ENCODE measurements at regions of chr3 and their contacts with region 1.

Region 1: DNA sequence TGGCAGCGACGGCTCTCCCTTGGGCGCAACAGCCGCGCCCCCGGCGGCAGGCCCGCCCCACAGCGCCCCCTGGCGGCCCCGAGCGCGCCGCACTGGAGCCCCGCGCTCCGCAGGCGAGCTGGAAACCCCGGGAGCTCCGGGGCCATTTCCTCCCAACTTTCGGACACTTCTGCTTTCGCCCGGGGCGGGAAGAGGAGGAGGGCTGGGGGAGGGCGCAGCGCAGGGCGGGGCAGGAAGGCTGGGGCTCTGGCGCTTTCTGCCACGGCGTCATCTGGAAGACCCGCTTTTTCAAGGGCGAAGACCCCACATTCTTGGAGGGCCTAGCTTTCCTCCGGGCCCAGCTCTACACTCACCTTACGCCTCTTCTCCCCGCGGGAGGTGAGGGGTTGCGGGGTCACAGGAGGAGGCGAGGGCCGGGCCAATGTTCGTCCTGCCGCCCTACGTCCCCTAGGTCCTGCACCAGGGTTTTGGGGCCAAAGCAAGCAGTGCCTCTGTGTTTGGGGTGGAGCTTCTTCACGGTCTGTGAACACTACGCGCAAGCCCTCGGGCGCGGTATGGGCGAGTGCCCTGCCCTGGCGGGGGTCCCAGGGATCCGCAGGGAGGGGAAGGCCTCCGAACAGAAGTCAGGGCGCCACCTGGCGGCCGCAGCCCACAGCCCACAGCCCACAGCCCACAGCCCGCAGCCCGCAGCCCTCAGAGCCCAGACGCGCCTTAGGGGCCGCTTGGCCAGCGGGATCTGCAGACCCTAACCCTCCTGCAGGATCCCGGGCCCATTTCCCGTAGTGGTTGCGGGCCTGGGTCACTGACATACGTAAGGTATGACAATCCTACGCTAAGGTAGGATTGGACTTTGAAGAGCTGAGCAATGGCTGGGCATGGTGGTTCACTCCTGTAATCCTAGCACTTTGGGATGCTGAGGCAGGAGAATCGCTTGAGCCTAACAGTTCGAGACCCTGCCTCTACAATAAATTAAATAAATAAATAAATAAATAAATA is 31.1 kb downstream of the FOXL2 start:
- DNase-seq: peak; percentile 34
- ATAC-seq: peak; percentile 97
- H3K4me3 ChIP-seq: peak overlapping the region; percentile 85
- H3K27ac ChIP-seq: peak overlapping the region; percentile 46; the same call in 1 of the 2 replicates
- H3K4me1 ChIP-seq: peaks cover 3% of the 10 kb centered on the region; the same call in 1 of the 2 replicates
- H3K27me3 ChIP-seq: peaks cover 0 to 4% of the 10 kb centered on the region in 2 experiments; a peak in 2 of 4 replicates
- CTCF ChIP-seq: peak; percentile 67 to 85 (median 82)
- EP300 ChIP-seq: no peak
- POLR2A ChIP-seq: 0 out of 2 replicates have a peak, but pooled peaks have one; percentile 25
- RAD21 ChIP-seq: peak; percentile 80

Region 2: DNA sequence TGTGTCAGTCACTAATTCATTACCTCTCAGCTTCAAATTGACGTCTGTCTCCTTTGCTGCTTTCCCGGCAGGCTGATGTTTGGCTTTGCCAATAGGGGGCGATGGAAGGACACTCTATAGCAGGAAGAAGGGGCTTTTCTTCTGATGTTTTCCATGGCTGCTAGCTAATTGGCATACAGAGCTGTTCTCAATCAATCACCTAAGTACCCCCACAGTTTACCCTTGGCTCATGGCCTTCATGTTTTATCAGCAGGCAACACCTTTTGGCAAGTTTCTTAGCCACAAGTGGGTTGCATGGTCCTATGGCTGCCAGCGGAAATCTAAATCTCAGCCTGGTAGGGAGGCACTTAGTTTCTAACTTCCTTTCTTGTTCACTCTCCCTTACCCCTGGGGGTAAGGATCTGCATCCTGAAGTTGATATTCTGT is 436.4 kb before region 1 on chr3:
- CTCF ChIA-PET with region 1: interaction called, 93 read pairs
- POLR2A ChIA-PET with region 1: no interaction called
- RAD21 ChIA-PET with region 1: interaction called, 51 read pairs
- SMC1A ChIA-PET with region 1: interaction called, 20 read pairs
- in situ Hi-C with region 1: loop called (anchors 5 kb)
- intact Hi-C with region 1: loop called (anchors 1 kb)
- DNase-seq: no peak
- ATAC-seq: peak; percentile 81
- H3K4me3 ChIP-seq: no peak overlapping the region
- H3K27ac ChIP-seq: no peak overlapping the region
- H3K4me1 ChIP-seq: no peaks in the 10 kb centered on the region
- H3K27me3 ChIP-seq: 0 out of 4 replicates have a peak, but pooled peaks cover 0 to 2% of the 10 kb centered on the region in 2 experiments
- CTCF ChIP-seq: peak; percentile 80 to 82 (median 81)
- EP300 ChIP-seq: no peak
- POLR2A ChIP-seq: no peak
- RAD21 ChIP-seq: peak; percentile 76

Region 3: GRCh38 chr3:138608322-138609135 is 307.3 kb before region 1 on chr3 and contains the start of gene FAIM:
- CTCF ChIA-PET with region 1: interaction called, 11 read pairs
- POLR2A ChIA-PET with region 1: no interaction called
- RAD21 ChIA-PET with region 1: interaction called, 5 read pairs
- SMC1A ChIA-PET with region 1: interaction called, 3 read pairs
- in situ Hi-C with region 1: no loop called
- intact Hi-C with region 1: no loop called
- DNase-seq: no peak
- ATAC-seq: peak; percentile 89
- H3K4me3 ChIP-seq: peak within 1 kb of the TSS; percentile 68
- H3K27ac ChIP-seq: peak within 1 kb of the TSS; percentile 38
- H3K4me1 ChIP-seq: peaks cover 5% of the 10 kb centered on the region
- H3K27me3 ChIP-seq: no peaks in the 10 kb centered on the region
- CTCF ChIP-seq: no peak
- EP300 ChIP-seq: no peak
- POLR2A ChIP-seq: peak; percentile 81
- RAD21 ChIP-seq: no peak
- polyA plus RNA-seq, gene FAIM: 21.5 to 32.8 TPM

Region 4: DNA sequence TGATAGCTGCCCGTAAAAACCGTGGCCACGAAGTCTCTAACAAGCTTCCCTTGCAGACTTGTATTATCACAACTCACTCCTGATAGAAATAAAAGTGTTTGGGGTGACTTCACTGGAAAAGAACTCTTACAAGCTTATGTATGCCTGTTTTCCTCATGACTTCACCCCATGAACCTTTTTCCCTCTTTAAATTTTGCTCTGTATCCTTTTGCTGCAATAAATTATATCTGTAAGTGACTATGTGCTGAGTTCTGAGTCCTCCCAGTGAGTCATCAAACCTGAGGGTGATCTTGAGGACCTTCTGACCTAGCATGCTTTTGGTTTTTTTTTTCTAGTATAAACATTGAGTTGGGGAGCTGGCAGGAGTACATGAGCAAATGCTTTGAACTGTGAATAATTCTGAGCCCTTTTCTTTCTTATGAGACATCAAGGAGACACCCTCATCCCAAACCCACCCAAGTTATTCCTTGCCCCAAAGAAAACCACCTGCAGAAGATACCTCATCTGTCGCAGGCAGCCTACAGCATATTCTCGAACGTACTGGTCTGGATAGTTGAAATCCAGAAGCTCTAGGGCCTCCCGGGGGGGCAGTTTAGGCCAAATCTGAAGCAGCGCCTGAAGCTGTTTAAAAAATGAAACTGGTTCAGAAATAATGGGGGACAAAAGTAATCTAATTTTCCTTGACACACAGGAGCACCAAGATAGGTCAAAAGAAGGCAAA is 221.4 kb before region 1 on chr3:
- CTCF ChIA-PET with region 1: interaction called, 380 read pairs
- POLR2A ChIA-PET with region 1: interaction called, 5 read pairs
- RAD21 ChIA-PET with region 1: interaction called, 146 read pairs
- SMC1A ChIA-PET with region 1: interaction called, 76 read pairs
- in situ Hi-C with region 1: loop called (anchors 5 kb)
- intact Hi-C with region 1: loop called (anchors 1 kb)
- DNase-seq: no peak
- ATAC-seq: no peak
- H3K4me3 ChIP-seq: no peak overlapping the region
- H3K27ac ChIP-seq: no peak overlapping the region
- H3K4me1 ChIP-seq: no peaks in the 10 kb centered on the region
- H3K27me3 ChIP-seq: no peaks in the 10 kb centered on the region
- CTCF ChIP-seq: no peak
- EP300 ChIP-seq: no peak
- POLR2A ChIP-seq: no peak
- RAD21 ChIP-seq: no peak

Region 5: GRCh38 chr3:138834359-138835212 is 81.2 kb before region 1 on chr3 and contains the start of gene PIK3CB:
- CTCF ChIA-PET with region 1: no interaction called
- POLR2A ChIA-PET with region 1: no interaction called
- RAD21 ChIA-PET with region 1: interaction called, 4 read pairs
- SMC1A ChIA-PET with region 1: interaction called, 5 read pairs
- in situ Hi-C with region 1: no loop called
- intact Hi-C with region 1: loop called (anchors 2 kb)
- DNase-seq: no peak
- ATAC-seq: peak; percentile 97
- H3K4me3 ChIP-seq: peak within 1 kb of the TSS; percentile 84
- H3K27ac ChIP-seq: peak within 1 kb of the TSS; percentile 88
- H3K4me1 ChIP-seq: peaks cover 6% of the 10 kb centered on the region
- H3K27me3 ChIP-seq: no peaks in the 10 kb centered on the region
- CTCF ChIP-seq: peak; percentile 10 to 47 (median 27); a peak in 3 of 6 replicates
- EP300 ChIP-seq: no peak
- POLR2A ChIP-seq: peak; percentile 94
- RAD21 ChIP-seq: no peak
- polyA plus RNA-seq, gene PIK3CB: 5.0 to 5.5 TPM

Region 6: DNA sequence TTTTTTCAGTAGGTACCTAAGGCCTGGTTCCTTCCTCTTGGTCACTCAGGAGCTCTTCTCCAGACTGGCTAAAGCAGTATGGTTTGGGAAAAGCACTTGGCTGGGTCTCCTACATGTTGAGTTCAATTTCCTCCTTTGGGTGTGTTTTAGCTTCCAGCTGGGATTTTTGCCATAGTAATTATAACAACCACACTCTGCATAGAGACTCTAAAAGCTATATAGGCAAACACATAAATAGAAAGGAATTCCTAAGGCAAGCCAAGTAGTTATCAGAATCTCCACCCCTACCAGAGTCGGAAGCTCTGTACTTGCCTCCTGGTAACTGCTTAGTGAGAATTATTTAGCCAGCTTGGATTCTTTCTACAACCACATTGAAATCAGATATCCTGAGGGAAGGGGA is 17.5 kb before region 1 on chr3:
- CTCF ChIA-PET with region 1: interaction called, 12 read pairs
- POLR2A ChIA-PET with region 1: no interaction called
- RAD21 ChIA-PET with region 1: interaction called, 4 read pairs
- SMC1A ChIA-PET with region 1: interaction called, 4 read pairs
- in situ Hi-C with region 1: no loop called
- intact Hi-C with region 1: no loop called
- DNase-seq: no peak
- ATAC-seq: no peak
- H3K4me3 ChIP-seq: no peak overlapping the region
- H3K27ac ChIP-seq: no peak overlapping the region
- H3K4me1 ChIP-seq: no peaks in the 10 kb centered on the region
- H3K27me3 ChIP-seq: no peaks in the 10 kb centered on the region; a peak in 2 of 4 replicates
- CTCF ChIP-seq: no peak
- EP300 ChIP-seq: no peak
- POLR2A ChIP-seq: no peak
- RAD21 ChIP-seq: no peak

Region 7: DNA sequence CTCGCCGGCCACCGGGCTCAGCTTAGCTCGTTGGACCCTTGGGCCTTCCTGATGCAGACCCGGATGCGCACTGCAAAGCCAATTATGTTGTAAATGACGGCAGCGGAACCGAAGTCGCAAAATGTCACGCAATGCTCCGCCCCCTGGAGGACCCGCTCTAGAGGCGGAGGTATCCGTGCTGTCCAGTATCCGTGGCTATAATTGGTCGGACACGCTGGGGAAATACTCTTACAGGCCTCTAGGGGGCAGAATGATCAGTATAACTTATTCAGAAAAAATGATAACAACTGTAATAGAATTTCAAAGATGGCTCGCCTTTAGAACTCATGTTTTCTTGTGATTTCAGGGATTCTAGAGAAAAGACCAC is 105.0 kb after region 1 on chr3 and contains the start of gene PRR23B:
- CTCF ChIA-PET with region 1: no interaction called
- POLR2A ChIA-PET with region 1: no interaction called
- RAD21 ChIA-PET with region 1: no interaction called
- SMC1A ChIA-PET with region 1: no interaction called
- in situ Hi-C with region 1: no loop called
- intact Hi-C with region 1: no loop called
- DNase-seq: no peak
- ATAC-seq: no peak
- H3K4me3 ChIP-seq: no peak within 1 kb of the TSS
- H3K27ac ChIP-seq: no peak within 1 kb of the TSS
- H3K4me1 ChIP-seq: no peaks in the 10 kb centered on the region
- H3K27me3 ChIP-seq: no peaks in the 10 kb centered on the region
- CTCF ChIP-seq: peak in 1 of 3 experiments; percentile 16; a peak in 1 of 6 replicates
- EP300 ChIP-seq: no peak
- POLR2A ChIP-seq: no peak
- RAD21 ChIP-seq: no peak
- polyA plus RNA-seq, gene PRR23B: not detected

Measured in GM12878 (cell line).